Activated CD4-positive, alpha-beta T cell treated with anti-CD3 and anti-CD28 coated beads, Interleukin-2, amount 10 ng/mL, durations not matched to agents 24 days and 14 days (primary cell): ENCODE measurements at regions of chrX and their contacts with region 1.

Region 1: GRCh38 chrX:51461053-51462044 is 35.0 kb downstream of the NUDT11 start:
- DNase-seq: peak; percentile 65
- H3K4me3 Mint-ChIP-seq: no peak overlapping the region
- H3K27ac Mint-ChIP-seq: no peak overlapping the region
- H3K4me1 Mint-ChIP-seq: no peaks in the 10 kb centered on the region
- H3K27me3 Mint-ChIP-seq: no peaks in the 10 kb centered on the region

Region 2: GRCh38 chrX:51144852-51145442 is 316.4 kb before region 1 on chrX:
- intact Hi-C with region 1: loop called (anchors 2 kb)
- DNase-seq: peak; percentile 68
- H3K4me3 Mint-ChIP-seq: no peak overlapping the region
- H3K27ac Mint-ChIP-seq: no peak overlapping the region
- H3K4me1 Mint-ChIP-seq: no peaks in the 10 kb centered on the region
- H3K27me3 Mint-ChIP-seq: peaks cover 11% of the 10 kb centered on the region

Region 3: GRCh38 chrX:51336584-51336983 is 124.8 kb before region 1 on chrX:
- intact Hi-C with region 1: loop called (anchors 2 kb)
- DNase-seq: peak; percentile 70
- H3K4me3 Mint-ChIP-seq: no peak overlapping the region
- H3K27ac Mint-ChIP-seq: no peak overlapping the region
- H3K4me1 Mint-ChIP-seq: peaks cover 4% of the 10 kb centered on the region
- H3K27me3 Mint-ChIP-seq: no peaks in the 10 kb centered on the region

Region 4: DNA sequence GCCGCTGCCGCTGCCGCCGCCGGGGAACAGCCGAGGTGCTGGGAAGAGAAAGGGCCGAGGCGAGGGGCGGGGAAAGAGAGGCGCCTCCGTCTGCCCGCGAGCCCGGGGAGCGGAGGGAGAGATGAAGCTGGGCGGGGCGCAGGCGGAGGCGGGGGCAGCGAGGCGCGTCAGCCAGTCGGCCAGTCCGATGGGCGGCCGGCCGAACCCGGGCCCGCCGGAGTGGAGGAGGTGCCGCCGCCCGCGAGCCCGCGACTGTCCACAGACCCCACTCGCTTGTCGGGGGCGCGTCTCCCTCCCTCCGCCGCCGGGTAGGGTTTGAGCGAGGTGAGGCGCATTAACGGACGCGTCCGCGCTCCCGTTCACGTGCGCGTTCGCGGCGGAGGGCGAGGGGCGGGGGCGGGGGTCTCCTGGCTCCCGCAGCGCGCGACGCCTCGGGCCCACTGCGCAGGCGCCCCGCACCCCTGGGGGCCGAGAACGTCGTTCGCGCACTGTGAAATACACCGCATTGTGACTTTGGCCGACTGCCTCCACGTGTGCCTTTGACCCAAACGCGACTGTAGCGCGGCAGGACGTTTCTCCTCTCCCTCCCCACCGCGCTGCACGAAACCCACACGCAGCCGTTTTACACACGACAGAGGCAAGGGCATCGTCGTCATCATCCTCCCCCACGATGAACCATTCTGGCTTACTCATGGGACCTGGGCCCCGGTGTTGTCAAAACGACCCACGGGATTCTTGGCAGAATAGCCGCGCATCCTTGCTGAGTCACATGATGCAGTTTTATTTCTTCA is 35.3 kb after region 1 on chrX and contains the start of gene NUDT11:
- intact Hi-C with region 1: no loop called
- DNase-seq: peak; percentile 87
- H3K4me3 Mint-ChIP-seq: peak within 1 kb of the TSS; percentile 90
- H3K27ac Mint-ChIP-seq: peak within 1 kb of the TSS; percentile 86
- H3K4me1 Mint-ChIP-seq: peaks cover 4% of the 10 kb centered on the region
- H3K27me3 Mint-ChIP-seq: peaks cover 18% of the 10 kb centered on the region
- total RNA-seq, gene NUDT11: 3.4 and 3.6 TPM in 2 replicates